Tibial artery (tissue), 4 donors: ENCODE measurements at regions of chr5 and their contacts with region 1.

Region 1: DNA sequence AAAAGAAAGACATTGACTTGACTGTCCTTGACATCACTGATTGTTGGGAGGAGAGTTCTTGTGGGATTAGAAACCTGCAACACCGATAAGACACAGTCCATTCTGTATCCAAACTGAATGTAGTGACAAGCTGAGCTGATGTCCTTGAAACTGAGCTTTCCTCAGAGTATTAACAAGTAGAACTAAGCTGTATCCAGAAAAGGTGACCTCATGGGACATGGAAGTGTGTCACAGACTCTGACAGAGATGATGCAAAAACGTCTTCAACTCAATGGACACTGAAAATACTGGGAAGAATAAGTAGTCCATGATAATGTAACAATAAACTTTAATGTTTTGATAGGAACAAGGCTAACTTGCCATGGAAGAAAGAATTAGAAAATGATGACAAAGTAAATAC is 690.1 kb downstream of the CDH18 start:
- DNase-seq: no peak
- H3K4me3 ChIP-seq: no peak overlapping the region
- H3K27ac ChIP-seq: no peak overlapping the region
- H3K4me1 ChIP-seq: no peaks in the 10 kb centered on the region
- H3K27me3 ChIP-seq: no peaks in the 10 kb centered on the region
- CTCF ChIP-seq: no peak

Region 2: GRCh38 chr5:19140276-19140675 is 157.7 kb before region 1 on chr5:
- intact Hi-C with region 1: no loop called
- DNase-seq: no peak
- H3K4me3 ChIP-seq: no peak overlapping the region
- H3K27ac ChIP-seq: no peak overlapping the region
- H3K4me1 ChIP-seq: no peaks in the 10 kb centered on the region
- H3K27me3 ChIP-seq: no peaks in the 10 kb centered on the region
- CTCF ChIP-seq: no peak

Region 3: DNA sequence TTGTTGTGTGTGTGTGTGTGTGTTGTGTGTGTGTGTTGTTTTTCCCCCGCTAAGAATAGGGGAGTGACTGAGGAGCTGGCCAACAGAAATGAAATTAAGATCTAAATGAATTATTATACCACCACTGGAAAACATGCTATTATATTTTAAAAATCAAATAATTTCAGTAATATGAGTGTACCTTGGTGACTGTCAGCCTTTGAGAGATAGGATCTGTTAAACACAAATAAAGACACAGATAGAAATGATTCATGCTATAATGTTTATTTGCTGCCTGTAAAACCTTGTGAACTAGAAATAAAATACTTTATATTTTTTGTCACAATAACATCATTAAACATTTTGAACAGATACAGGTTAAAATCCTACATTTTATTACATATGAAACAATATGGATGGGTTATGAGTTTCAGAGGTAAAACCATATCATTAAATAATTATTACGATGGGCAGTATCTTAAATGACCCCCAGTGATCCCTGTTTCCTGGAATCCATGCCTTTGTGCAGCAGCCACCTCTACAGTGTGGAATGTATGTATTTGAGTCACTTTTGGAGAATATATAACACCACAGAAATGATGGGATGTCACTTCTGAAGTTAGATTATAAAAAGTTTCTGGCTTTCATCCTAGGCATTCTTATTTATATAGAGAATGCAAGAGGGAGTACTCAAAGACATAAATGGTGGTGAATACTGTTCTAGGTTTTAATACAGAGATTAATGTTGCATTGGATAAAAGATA is 72.9 kb after region 1 on chr5:
- intact Hi-C with region 1: loop called (anchors 5 kb)
- DNase-seq: no peak
- H3K4me3 ChIP-seq: no peak overlapping the region
- H3K27ac ChIP-seq: no peak overlapping the region
- H3K4me1 ChIP-seq: no peaks in the 10 kb centered on the region
- H3K27me3 ChIP-seq: no peaks in the 10 kb centered on the region
- CTCF ChIP-seq: no peak